Panc1 (cell line): ENCODE measurements at regions of chr19 and their contacts with region 1.

Region 1: DNA sequence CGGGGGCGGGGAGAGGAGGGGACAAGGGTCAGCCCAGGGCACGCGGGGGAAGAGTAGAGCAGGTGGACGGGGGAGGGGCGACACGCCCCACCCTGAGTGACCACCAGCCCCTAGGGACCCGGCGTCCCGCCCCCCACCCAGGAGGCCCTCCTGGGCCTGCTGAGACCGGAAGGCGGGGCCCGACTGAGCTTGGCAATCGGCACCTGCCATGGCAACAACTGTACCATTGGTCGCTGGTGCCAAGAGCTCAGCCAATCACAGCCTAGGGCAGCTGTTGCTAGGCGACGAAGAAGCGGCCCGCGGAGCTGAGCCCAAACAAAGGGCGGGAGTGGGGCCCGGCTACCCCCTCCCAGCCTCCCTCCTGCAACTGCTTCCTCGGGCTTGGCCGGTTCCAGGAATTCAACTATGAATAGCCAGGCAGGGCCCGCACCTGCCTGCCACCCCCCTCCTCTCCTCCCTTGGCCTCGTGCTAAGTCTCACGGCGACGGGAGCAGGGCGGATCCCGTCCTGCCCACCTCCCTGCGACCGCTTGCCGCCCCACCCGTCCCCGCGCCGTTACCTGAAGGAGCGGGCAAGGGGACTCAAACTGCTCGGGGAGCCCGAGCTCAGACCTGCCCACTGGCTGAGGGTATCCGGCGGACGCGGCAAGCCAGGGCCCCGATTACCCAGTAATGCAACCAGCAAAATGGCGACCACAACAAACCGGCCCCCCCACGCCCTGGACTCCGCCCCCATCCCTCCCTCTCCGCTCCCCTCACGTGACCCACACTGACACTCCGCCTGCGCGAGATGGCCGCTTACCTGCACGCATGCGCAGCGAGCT is at the start of gene DYRK1B:
- DNase-seq: peak; percentile 100
- ATAC-seq: peak; percentile 94
- H3K4me3 ChIP-seq: peak within 1 kb of the TSS; percentile 36 to 57
- H3K27ac ChIP-seq: peak within 1 kb of the TSS; percentile 76
- H3K4me1 ChIP-seq: peaks cover 26% of the 10 kb centered on the region
- H3K27me3 ChIP-seq: no peaks in the 10 kb centered on the region
- CTCF ChIP-seq: no peak
- total RNA-seq, gene DYRK1B: 322 TPM

Region 2: DNA sequence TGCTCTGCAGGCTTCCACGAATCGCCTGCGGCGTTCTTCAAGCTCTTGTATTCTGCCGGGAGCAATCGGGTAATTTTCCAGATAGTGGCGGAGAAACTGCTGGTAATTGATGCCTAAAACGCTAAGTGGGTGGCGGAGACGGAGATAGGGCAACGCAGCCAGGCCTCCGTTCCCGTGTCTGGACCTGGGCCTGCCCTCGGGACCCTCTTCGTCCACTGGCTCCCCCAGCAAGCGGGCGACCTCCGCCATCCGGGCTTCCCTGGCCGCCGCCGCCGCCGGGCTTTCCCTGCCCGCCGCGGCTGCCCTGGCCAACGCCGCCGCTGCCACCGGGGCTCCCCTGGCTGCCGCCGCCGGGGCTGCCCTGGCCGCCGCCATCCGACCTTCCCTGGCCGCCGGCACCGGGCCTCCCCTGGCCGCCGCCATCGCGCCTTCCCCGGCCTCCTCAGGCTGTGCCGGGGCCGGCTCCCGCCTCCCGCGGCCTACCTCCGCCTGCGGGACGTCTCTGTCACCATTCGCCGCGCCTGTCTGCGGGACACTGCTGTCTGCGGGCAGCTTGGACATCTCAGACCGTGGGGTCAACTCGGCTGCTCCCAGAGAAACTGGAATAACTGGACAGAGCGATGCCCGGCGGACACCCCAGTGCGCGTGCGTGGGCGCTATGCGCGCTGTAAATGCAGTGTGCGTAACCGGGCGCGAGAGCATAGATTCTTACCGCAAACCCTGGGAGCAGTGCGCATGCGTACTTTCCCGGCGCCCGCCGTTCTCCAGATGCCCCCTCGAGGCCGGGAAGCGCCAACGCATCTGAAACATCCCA is 293.9 kb before region 1 on chr19 and contains the start of gene EID2:
- CTCF ChIA-PET with region 1: no interaction called
- POLR2A ChIA-PET with region 1: interaction called, 8 read pairs
- in situ Hi-C with region 1: no loop called
- intact Hi-C with region 1: loop called (anchors 5 kb)
- DNase-seq: peak; percentile 100
- ATAC-seq: peak; percentile 97
- H3K4me3 ChIP-seq: peak within 1 kb of the TSS; percentile 36 to 59
- H3K27ac ChIP-seq: peak within 1 kb of the TSS; percentile 78
- H3K4me1 ChIP-seq: peaks cover 26% of the 10 kb centered on the region
- H3K27me3 ChIP-seq: peaks cover 11% of the 10 kb centered on the region
- CTCF ChIP-seq: no peak
- total RNA-seq, gene EID2: 163 TPM

Region 3: GRCh38 chr19:39805104-39805503 is 28.6 kb before region 1 on chr19:
- CTCF ChIA-PET with region 1: interaction called, 7 read pairs
- POLR2A ChIA-PET with region 1: interaction called, 20 read pairs
- in situ Hi-C with region 1: no loop called
- intact Hi-C with region 1: no loop called
- DNase-seq: no peak
- ATAC-seq: no peak
- H3K4me3 ChIP-seq: no peak overlapping the region
- H3K27ac ChIP-seq: no peak overlapping the region
- H3K4me1 ChIP-seq: peaks cover 6% of the 10 kb centered on the region; the same call in 1 of the 2 replicates
- H3K27me3 ChIP-seq: peaks cover 29% of the 10 kb centered on the region
- CTCF ChIP-seq: no peak

Region 4: DNA sequence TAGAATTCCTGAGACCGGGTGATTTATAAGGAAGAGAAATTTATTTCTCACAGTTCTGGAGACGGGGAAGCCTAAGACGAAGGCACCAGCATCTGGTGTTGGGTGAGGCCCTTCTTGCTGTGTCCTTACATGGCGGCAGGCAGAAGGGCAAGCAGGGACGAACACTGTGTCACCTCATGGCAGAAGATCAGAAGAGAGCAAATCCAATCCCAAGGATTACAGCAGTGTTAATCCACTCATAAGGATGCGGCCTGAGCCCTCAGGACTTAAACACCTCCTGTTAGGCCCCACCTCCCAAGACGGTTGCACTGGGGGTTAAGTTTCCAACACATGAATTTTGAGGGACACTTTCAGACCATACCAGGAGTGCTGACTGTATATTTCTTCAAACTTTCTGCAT is 19.2 kb after region 1 on chr19:
- CTCF ChIA-PET with region 1: interaction called, 109 read pairs
- POLR2A ChIA-PET with region 1: interaction called, 177 read pairs
- in situ Hi-C with region 1: no loop called
- intact Hi-C with region 1: no loop called
- DNase-seq: no peak
- ATAC-seq: no peak
- H3K4me3 ChIP-seq: no peak overlapping the region
- H3K27ac ChIP-seq: no peak overlapping the region
- H3K4me1 ChIP-seq: peaks cover 4% of the 10 kb centered on the region; the same call in 1 of the 2 replicates
- H3K27me3 ChIP-seq: no peaks in the 10 kb centered on the region
- CTCF ChIP-seq: no peak

Region 5: DNA sequence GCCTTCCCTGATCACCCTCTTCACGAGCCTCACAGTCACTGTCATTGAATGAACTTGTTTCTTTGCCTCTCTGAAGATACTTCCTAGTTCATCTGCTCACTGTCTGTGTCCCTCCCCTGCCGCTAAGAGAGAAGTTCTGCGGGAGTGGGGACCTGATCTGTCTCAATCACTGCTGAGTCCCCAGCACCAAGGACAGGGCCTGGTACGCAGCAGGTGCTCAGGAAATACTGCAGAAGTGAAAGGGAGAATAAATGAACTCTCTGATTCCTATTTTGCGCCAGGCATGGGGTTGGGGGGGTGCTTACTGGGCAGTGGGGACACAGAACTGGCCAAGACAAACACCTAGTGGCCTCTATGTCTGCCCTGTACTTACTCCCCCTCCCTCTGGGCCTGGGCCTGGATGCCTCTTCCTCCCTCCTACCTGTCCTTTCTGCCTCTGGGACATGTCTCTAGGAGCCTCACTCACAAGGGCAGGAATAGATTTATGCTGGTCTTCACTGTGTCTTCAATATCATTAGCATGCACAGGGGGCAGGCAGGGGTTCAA is 83.2 kb after region 1 on chr19:
- CTCF ChIA-PET with region 1: no interaction called
- POLR2A ChIA-PET with region 1: interaction called, 12 read pairs
- in situ Hi-C with region 1: no loop called
- intact Hi-C with region 1: no loop called
- DNase-seq: no peak
- ATAC-seq: peak; percentile 7; the same call in 1 of the 2 replicates
- H3K4me3 ChIP-seq: no peak overlapping the region
- H3K27ac ChIP-seq: no peak overlapping the region
- H3K4me1 ChIP-seq: no peaks in the 10 kb centered on the region
- H3K27me3 ChIP-seq: no peaks in the 10 kb centered on the region
- CTCF ChIP-seq: no peak